ENCODE measurements at regions of chr12 and their contacts with region 1.

Region 1: DNA sequence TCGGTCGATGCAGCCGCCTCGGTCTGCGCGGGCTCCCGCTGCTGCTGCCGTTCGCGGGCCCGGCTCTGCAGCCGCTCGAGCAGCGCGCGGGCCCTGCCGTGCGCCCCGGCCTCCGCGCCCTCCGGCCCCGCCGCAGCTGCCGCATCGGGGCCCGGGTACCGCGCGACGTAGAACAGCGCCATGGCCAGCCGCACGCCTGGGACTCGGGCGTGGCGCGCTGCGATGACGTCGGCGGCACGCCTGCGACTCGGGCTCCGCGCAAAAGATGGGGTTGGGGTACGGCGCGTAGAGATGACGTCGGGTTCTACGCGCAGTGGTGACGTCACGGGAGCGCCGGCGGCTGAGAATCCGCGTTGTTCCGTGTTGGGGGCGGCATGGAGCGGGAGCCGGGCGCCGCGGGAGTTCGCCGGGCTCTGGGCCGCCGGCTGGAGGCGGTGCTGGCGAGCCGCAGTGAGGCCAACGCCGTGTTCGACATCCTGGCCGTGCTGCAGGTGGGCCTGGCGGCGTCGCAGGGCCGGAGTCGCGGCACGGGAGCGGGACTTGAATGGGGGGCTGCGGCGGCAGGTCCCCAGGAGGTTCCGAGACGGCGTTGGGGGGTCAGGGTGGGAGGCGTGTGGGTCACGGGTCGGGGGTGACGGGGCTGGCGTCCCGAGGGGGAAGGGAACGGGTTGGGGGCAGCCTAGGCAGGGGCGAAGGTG is at the starts of genes DDX51 and NOC4L:
- DNase-seq: peak; percentile 89 to 95 (median 92)
- H3K4me3 ChIP-seq: peak within 1 kb of the TSS; percentile 69 to 99 (median 89)
- H3K27ac ChIP-seq: peak within 1 kb of the TSS in 49 of 59 donors; percentile 29 to 94 (median 75)
- H3K27me3 ChIP-seq: no peaks in the 10 kb centered on the region
- CTCF ChIP-seq: peak in 37 of 56 donors; percentile 7 to 59 (median 25)
- total RNA-seq, gene DDX51: 20.7 to 53.2 (median 34.1) TPM
- total RNA-seq, gene NOC4L: 10.5 to 25.2 (median 15.5) TPM

Region 2: GRCh38 chr12:131928711-131929580 is 215.3 kb before region 1 on chr12 and contains the start of gene PUS1:
- intact Hi-C with region 1: loop called in 1 of 2 experiments (anchors 10 kb)
- DNase-seq: peak; percentile 86 to 97 (median 94)
- H3K4me3 ChIP-seq: peak within 1 kb of the TSS; percentile 64 to 95 (median 85)
- H3K27ac ChIP-seq: peak within 1 kb of the TSS in 55 of 59 donors; percentile 20 to 92 (median 80)
- H3K27me3 ChIP-seq: no peaks in the 10 kb centered on the region
- CTCF ChIP-seq: peak in 28 of 56 donors; percentile 5 to 47 (median 20)
- total RNA-seq, gene PUS1: 14.3 to 37.0 (median 24.2) TPM

Region 3: GRCh38 chr12:132083941-132084620 is 60.2 kb before region 1 on chr12:
- intact Hi-C with region 1: loop called (anchors 5 to 10 kb)
- DNase-seq: peak; percentile 85 to 96 (median 88)
- H3K4me3 ChIP-seq: peak overlapping the region; percentile 71 to 98 (median 90)
- H3K27ac ChIP-seq: peak overlapping the region in 49 of 59 donors; percentile 18 to 88 (median 72)
- H3K27me3 ChIP-seq: no peaks in the 10 kb centered on the region
- CTCF ChIP-seq: peak in 15 of 56 donors; percentile 9 to 46 (median 21)

Region 4: DNA sequence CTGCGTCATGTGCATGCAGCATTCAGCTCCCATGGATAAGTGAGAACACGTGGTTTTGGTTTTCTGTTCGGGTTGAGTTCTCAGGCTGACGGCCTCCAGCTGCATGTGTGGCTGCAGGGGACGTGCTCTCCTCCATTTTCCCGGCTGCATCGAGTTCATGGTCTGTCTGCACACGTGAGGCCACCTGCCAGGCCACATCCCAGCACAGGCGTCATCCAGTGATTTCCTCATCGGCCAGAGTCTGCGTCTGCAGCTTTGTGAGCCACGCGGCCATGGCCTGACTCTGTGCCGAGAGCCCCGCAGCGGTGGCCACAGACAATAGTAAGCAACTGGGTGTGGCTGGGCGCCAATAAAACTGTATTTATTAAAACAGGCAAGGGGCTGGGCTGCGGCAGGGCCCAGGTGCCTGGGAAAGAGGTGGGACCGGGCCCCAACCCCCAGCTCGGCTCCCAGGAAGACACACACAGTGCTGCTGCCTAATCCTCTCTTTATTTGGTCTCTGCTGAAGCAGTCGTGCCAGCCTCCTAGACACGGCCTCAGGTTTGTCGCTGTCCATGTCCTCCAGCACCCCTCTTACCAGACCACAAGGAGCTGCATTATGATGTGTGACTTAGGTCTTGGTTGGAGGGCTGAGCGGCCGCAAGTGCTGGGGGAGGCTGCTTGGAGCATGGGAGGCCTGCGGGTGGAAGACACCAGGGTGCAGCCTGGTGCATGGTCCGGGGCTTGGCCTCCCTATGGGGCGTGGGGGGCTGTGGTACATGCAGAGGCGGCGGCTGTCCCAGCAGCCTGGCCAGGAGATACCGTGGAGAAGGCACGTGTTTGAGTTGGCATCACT is 52.0 kb after region 1 on chr12:
- intact Hi-C with region 1: loop called in 1 of 2 experiments (anchors 5 kb)
- DNase-seq: no peak
- H3K4me3 ChIP-seq: no peak overlapping the region
- H3K27ac ChIP-seq: no peak overlapping the region
- H3K27me3 ChIP-seq: peaks cover 0 to 10% (median 0%) of the 10 kb centered on the region in 45 donors
- CTCF ChIP-seq: no peak

Region 5: GRCh38 chr12:132489602-132490239 is 345.5 kb after region 1 on chr12 and contains the start of gene FBRSL1:
- intact Hi-C with region 1: loop called in 1 of 2 experiments (anchors 10 kb)
- DNase-seq: peak; percentile 83 to 90 (median 88)
- H3K4me3 ChIP-seq: peak within 1 kb of the TSS; percentile 55 to 86 (median 76)
- H3K27ac ChIP-seq: peak within 1 kb of the TSS in 55 of 59 donors; percentile 20 to 89 (median 78)
- H3K27me3 ChIP-seq: no peaks in the 10 kb centered on the region
- CTCF ChIP-seq: no peak
- total RNA-seq, gene FBRSL1: 41.4 to 125 (median 65.3) TPM